ENCODE measurements at regions of chr6 and their contacts with region 1.

Region 1: DNA sequence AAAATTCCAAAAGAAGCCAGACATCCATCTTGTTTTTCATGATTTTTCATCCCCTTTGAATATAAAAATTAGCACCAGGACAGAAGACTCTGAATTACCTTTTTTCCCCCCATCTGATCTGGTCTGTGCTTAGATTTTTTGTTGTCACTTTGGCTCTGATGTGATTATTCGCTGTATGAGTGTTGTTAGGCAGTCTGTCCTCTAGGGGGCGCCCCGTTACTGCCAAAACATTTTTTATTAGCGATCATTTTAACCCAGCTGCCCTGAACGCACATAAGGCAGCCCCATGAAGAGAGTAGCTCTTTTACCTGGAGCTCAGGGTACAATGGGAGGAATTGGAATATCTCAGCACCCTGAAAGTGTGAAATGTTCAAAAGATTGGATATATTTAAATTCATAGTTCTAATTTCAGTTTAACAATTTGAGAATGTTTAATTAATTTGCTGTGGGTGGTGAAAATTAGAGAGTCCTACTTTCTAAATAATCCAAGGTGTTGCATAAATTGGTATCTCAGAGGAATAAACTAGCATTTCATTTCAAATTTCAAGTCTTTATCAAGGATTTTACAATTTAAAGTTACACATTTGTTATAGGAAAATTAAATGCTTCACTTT is 60.8 kb downstream of the PRPH2 start:
- DNase-seq: peak; percentile 55
- CTCF ChIP-seq: peak; percentile 84

Region 2: DNA sequence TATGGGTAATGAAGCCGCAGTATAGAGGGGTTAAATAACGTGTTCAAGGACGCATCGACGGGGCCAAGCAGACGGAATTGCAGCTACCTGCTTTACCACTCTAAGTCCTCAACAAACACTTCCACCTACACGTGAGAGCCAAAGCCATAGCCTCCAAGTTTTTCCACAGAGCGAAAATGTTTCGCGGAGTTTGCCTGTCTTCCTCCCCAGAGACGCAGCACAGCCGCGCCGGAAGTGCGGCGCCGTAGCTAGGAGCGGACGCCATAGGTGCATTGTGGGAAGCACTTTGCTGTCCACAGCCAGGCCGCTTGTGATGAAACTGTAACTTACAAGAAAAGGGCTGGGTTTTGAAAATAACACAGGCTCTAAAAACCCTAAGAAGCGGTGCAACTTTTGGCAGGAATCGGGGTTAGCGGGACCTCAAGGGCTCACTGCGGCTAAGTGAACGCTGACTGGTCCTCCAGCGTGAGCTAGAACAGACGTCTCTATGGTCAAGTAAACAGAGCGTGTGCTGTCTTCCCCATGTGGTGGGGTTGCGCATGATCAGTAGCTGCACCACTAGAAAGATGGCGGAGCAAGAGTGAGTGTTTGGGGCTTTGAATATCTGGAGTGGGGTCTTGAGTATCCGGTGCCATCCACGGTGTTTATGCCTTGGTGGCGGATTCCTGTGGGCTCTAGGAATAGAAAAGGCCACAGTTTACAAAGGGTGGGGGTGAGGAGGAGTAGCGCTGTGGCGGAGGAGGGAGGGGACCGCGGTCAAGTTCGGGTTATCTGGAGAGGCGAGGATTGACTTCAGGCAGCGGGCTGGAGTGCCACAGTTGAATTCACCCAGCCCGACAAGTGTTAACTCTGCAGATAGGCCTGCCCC is 218.0 kb after region 1 on chr6 and contains the start of gene RPL7L1:
- in situ Hi-C with region 1: loop called (anchors 10 kb)
- DNase-seq: peak; percentile 84
- CTCF ChIP-seq: no peak